GM18951 (cell line): ENCODE measurements at regions of chr2 and their contacts with region 1.

Region 1: DNA sequence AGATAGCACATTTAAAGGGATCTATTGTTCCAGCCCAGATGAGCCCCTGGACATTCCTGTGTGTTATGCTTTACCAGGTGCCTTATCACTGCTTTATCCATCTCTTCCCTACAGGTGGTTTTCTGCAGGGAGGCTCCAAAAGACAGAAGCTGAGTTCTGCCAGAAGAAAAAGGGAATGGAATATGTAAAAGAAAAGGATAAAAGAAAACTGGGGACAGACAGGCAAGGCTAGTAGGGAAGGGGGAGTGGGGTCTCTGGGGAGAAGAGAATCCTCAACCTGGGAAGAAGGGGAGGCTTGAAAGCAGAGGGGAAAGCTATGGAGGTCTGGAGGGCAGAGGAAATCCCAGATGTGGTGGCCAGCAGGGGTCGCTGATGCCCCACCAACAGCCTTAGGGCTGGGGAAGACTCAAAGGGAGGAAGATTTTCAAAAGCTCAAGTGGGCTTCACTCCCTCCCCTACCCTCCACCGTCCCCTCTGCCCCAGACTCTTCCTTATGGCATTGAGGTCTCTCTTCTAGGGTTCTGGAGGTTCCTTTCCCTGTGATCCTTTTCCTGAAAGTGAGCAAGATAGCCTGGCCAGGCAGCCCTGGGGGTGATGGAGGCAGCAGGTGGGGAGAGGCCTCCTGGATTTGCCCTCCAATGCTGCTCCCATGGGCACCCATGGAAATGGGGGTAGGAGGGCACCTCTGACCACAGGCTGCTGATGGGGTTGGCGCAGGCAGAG is 178.1 kb upstream of the PKDCC start:
- POLR2A ChIP-seq: no peak

Region 2: DNA sequence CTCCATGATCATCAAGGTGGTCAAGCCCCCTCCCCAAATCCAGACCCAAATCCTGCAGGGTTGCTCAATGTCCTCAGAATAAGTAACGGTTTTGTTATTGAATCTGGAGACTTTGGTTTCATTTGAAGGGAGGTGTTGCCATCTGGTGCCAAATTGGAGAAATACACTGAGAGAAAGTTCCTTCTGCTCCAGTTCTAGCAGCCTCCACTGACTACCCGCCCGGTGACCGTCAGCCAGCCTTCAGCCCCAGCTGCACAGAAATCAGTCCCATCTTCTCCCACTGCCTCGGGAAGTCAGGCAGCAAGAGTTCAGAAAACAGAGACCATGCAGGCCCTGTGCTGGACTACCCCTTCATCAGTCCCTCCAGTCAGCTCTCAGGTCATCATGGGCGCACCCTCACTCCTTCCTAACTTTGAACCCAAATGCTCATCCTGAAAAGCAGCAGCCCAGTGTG is 216.8 kb after region 1 on chr2:
- in situ Hi-C with region 1: loop called (anchors 5 kb)
- POLR2A ChIP-seq: no peak

Region 3: GRCh38 chr2:42216712-42217111 is 347.0 kb after region 1 on chr2:
- in situ Hi-C with region 1: loop called (anchors 25 kb)
- POLR2A ChIP-seq: no peak

Region 4: GRCh38 chr2:42360890-42361727 is 491.4 kb after region 1 on chr2 and contains the start of gene COX7A2L:
- in situ Hi-C with region 1: loop called (anchors 25 kb)
- POLR2A ChIP-seq: peak; percentile 72